ENCODE measurements at regions of chr14 and their contacts with region 1.

Region 1: GRCh38 chr14:74905375-74906142 is 17.5 kb downstream of the RPS6KL1 start:
- DNase-seq: peak; percentile 69 to 83
- H3K4me3 ChIP-seq: no peak overlapping the region
- H3K4me3 Mint-ChIP-seq: no peak overlapping the region
- H3K27ac Mint-ChIP-seq: no peak overlapping the region
- H3K4me1 ChIP-seq: no peaks in the 10 kb centered on the region
- H3K4me1 Mint-ChIP-seq: no peaks in the 10 kb centered on the region
- H3K27me3 ChIP-seq: no peaks in the 10 kb centered on the region
- H3K27me3 Mint-ChIP-seq: no peaks in the 10 kb centered on the region
- CTCF ChIP-seq: peak; percentile 92 to 95

Region 2: GRCh38 chr14:74881431-74882361 is 23.9 kb before region 1 on chr14 and contains the start of gene DLST:
- CTCF ChIA-PET with region 1: interaction called, 48 read pairs
- POLR2A ChIA-PET with region 1: no interaction called
- intact Hi-C with region 1: loop called (anchors 1 kb)
- DNase-seq: peak; percentile 89 to 94
- H3K4me3 ChIP-seq: peak within 1 kb of the TSS; percentile 93
- H3K4me3 Mint-ChIP-seq: peak within 1 kb of the TSS; percentile 95
- H3K27ac Mint-ChIP-seq: peak within 1 kb of the TSS; percentile 91
- H3K4me1 ChIP-seq: peaks cover 19% of the 10 kb centered on the region
- H3K4me1 Mint-ChIP-seq: peaks cover 44% of the 10 kb centered on the region
- H3K27me3 ChIP-seq: no peaks in the 10 kb centered on the region
- H3K27me3 Mint-ChIP-seq: no peaks in the 10 kb centered on the region
- CTCF ChIP-seq: no peak
- total RNA-seq, gene DLST: 81.4 and 88.1 TPM in 2 replicates

Region 3: DNA sequence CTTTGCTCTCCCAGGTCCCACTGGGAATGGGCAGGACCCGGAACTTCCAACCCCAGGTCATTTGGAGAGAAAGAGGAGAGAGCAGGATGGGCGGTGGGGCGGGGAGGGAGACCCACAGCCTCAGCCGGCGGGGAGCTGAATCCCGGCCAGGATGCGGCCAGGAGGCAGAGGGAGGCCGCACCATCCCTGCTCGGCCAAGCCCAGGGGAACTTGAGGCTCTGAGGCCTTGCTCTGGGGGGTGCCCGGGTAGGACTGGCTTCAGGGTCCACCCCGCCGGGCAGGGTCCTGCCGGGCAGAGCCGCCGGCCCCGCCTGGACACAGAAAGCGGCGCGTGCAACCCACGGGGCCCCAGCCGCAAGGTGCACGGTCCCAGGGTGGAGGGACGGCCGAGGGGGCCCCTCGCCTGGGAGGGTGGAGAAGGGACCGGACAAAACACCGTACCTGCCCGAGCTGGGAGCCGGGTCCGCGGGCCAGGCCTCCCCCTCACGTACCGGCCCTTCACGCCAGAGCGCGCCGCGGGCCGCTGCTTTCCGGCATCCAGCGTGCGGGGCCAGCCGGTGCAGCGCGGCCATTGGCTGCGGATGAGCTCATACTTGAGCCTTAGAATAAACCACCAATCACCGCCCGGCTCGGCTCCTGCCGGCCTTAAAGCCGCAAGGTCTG is 17.3 kb after region 1 on chr14 and contains the start of gene RPS6KL1:
- CTCF ChIA-PET with region 1: interaction called, 13 read pairs
- POLR2A ChIA-PET with region 1: interaction called, 4 read pairs
- intact Hi-C with region 1: no loop called
- DNase-seq: peak; percentile 80 to 87
- H3K4me3 ChIP-seq: peak within 1 kb of the TSS; percentile 75
- H3K4me3 Mint-ChIP-seq: peak within 1 kb of the TSS; percentile 84
- H3K27ac Mint-ChIP-seq: no peak within 1 kb of the TSS
- H3K4me1 ChIP-seq: no peaks in the 10 kb centered on the region
- H3K4me1 Mint-ChIP-seq: peaks cover 6% of the 10 kb centered on the region
- H3K27me3 ChIP-seq: no peaks in the 10 kb centered on the region; the same call in 1 of the 2 replicates
- H3K27me3 Mint-ChIP-seq: peaks cover 5% of the 10 kb centered on the region
- CTCF ChIP-seq: no peak
- total RNA-seq, gene RPS6KL1: 6.8 and 9.8 TPM in 2 replicates

Measured in Caco-2 (cell line).